Right ventricle myocardium inferior (tissue), 1 donor: ENCODE measurements at regions of chr10 and their contacts with region 1.

Region 1: GRCh38 chr10:71569775-71570588 is 149.6 kb downstream of the C10orf105 start:
- DNase-seq: no peak
- ATAC-seq: peak; percentile 44

Region 2: DNA sequence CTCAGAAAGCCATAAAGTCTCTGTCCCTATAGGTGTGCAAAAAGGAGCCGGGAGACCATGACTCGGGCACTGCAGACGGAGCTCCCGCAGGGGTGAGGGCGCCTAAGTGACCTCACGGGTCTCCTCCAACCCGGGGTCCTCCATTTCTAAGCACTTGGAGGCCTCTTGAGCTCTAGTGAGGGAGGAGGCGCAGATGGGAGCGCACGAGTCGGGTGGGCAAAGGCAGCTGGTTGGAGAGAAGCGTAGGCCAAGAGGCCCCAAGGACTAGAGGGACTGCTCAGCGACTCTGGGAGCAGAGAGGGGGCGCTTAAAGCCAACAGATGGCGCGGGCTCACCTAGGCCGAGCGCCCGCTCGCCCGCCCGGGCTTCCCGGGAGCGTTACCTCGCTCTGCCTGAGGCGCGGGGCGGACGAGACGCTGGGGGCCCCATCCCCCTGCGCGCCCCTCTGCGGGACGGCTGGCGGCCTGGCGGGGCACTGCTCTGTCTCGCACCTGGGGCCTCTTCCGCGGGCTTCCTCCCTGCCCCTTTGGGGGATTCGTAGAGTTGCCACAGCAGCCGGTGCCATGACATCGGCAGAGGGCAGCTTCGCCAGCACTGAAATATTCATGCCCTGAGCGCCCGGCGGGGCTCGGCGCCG is 173.8 kb before region 1 on chr10:
- intact Hi-C with region 1: loop called (anchors 1 kb)
- DNase-seq: peak; percentile 76
- ATAC-seq: peak; percentile 92

Region 3: DNA sequence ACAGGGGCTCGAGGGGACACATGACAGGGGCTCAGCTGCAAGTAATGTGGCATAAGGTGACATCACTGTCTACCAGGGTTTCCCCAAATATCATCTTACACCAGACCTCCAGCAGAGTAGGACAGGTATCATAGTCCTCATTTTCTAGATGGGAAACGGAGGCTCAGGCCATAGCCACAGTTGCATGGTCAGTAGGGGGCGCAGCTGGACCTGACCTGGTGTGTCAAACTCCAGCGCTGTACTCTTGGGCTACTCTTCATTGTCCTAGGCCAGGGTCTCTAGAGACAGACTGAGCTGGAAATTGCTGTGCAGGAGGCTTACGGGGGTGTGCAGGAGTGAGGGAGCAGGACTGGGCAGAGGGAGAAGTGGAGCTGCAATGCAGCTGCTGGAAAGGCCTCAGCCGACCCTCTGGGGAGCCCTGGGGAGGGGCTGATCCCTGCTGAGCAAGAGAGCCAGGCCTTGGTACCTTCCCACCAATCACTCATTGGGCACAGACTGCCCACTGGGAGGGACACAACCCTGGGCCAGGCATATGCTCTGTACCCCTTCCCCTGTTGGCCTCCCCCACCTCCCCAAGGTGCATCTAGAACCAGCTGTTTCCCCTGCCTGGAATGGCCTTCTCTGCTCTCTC is 83.4 kb before region 1 on chr10:
- intact Hi-C with region 1: loop called (anchors 5 kb)
- DNase-seq: no peak
- ATAC-seq: no peak